Gastrocnemius medialis (tissue), 4 donors: ENCODE measurements at regions of chr19 and their contacts with region 1.

Region 1: DNA sequence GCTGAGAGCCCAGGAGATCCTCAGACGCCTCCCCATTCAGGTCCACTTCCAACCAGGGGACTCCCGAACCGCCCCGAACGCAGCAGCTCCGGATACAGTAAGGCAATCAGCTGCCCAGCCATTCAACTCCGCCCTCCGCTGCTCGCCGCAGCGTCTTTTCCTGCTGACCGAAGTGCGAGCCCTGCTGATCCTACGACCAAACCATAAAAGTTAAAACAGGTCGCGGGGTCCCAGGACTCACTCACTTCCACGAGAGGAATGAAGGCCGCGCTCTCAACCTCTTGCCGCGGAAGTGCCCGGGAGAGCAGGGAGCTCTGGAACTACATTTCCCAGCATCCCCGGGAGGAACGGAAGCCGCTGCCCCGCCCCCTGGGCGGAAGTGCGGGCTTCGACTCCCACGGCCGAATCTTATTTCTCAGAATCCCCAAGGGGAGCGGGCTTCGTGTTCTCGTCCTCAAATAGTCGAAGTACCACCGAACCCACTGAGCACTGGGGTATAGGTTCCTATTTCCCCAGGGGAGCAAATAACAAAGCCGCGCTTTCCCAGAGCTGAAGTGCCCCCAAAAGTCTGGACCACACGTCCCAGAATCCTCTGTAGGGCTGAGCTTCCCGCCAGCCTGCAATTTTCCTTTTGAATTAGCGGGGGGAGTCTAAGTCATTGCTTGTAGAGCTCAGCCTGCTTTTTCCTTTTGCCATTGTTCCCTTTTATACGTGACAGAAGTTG is at the start of gene ZNF45:
- DNase-seq: peak; percentile 80 to 83
- ATAC-seq: peak; percentile 98 to 99
- H3K4me3 ChIP-seq: peak within 1 kb of the TSS; percentile 52 to 78 (median 68)
- H3K27ac ChIP-seq: peak within 1 kb of the TSS; percentile 71 to 87 (median 77)
- H3K4me1 ChIP-seq: peaks cover 14 to 17% of the 10 kb centered on the region in 2 donors
- H3K27me3 ChIP-seq: no peaks in the 10 kb centered on the region
- CTCF ChIP-seq: no peak
- POLR2A ChIP-seq: no peak
- total RNA-seq, gene ZNF45: 2.8 to 7.7 (median 4.0) TPM

Region 2: DNA sequence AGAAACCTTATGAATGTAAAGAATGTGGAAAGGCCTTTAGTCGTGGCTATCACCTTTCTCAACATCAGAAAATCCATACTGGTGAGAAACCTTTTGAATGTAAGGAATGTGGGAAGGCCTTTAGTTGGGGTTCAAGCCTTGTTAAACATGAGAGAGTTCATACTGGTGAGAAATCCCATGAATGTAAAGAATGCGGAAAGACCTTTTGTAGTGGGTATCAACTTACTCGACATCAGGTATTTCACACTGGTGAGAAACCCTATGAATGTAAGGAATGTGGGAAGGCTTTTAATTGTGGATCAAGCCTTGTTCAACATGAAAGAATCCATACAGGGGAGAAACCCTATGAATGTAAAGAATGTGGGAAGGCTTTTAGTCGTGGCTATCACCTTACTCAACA is 87.3 kb before region 1 on chr19:
- in situ Hi-C with region 1: no loop called
- intact Hi-C with region 1: no loop called
- DNase-seq: no peak
- ATAC-seq: no peak
- H3K4me3 ChIP-seq: peak overlapping the region in 1 of 4 donors; percentile 28
- H3K27ac ChIP-seq: no peak overlapping the region
- H3K4me1 ChIP-seq: no peaks in the 10 kb centered on the region
- H3K27me3 ChIP-seq: no peaks in the 10 kb centered on the region
- CTCF ChIP-seq: no peak
- POLR2A ChIP-seq: no peak

Region 3: GRCh38 chr19:43950834-43951645 is 15.9 kb after region 1 on chr19 and contains the start of gene ZNF221:
- in situ Hi-C with region 1: no loop called
- intact Hi-C with region 1: loop called (anchors 1 kb)
- DNase-seq: peak; percentile 87 to 90
- ATAC-seq: peak; percentile 100
- H3K4me3 ChIP-seq: peak within 1 kb of the TSS; percentile 70 to 97 (median 84)
- H3K27ac ChIP-seq: peak within 1 kb of the TSS; percentile 66 to 80 (median 74)
- H3K4me1 ChIP-seq: peaks cover 0 to 3% of the 10 kb centered on the region in 2 donors
- H3K27me3 ChIP-seq: no peaks in the 10 kb centered on the region
- CTCF ChIP-seq: peak in 4 of 5 experiments; percentile 19 to 48 (median 38)
- POLR2A ChIP-seq: no peak
- total RNA-seq, gene ZNF221: 0.76 to 15.3 (median 0.96) TPM

Region 4: DNA sequence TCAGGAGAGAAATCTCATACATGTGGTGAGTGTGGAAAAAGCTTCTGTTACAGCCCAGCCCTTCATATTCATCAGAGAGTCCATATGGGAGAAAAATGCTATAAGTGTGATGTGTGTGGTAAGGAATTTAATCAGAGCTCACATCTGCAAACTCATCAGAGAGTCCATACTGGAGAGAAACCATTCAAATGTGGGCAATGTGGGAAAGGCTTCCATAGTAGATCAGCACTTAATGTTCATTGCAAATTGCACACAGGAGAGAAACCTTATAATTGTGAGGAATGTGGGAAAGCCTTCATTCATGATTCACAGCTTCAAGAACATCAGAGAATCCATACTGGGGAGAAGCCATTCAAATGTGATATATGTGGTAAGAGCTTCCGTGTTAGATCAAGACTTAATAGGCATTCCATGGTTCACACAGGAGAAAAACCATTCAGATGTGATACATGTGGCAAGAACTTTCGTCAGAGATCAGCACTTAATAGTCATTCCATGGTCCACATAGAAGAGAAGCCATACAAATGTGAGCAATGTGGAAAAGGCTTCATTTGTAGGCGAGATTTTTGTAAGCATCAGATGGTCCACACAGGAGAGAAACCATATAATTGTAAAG is 31.0 kb after region 1 on chr19:
- in situ Hi-C with region 1: no loop called
- intact Hi-C with region 1: no loop called
- DNase-seq: no peak
- ATAC-seq: no peak
- H3K4me3 ChIP-seq: peak overlapping the region in 1 of 4 donors; percentile 35
- H3K27ac ChIP-seq: no peak overlapping the region
- H3K4me1 ChIP-seq: no peaks in the 10 kb centered on the region
- H3K27me3 ChIP-seq: no peaks in the 10 kb centered on the region
- CTCF ChIP-seq: no peak
- POLR2A ChIP-seq: no peak

Region 5: DNA sequence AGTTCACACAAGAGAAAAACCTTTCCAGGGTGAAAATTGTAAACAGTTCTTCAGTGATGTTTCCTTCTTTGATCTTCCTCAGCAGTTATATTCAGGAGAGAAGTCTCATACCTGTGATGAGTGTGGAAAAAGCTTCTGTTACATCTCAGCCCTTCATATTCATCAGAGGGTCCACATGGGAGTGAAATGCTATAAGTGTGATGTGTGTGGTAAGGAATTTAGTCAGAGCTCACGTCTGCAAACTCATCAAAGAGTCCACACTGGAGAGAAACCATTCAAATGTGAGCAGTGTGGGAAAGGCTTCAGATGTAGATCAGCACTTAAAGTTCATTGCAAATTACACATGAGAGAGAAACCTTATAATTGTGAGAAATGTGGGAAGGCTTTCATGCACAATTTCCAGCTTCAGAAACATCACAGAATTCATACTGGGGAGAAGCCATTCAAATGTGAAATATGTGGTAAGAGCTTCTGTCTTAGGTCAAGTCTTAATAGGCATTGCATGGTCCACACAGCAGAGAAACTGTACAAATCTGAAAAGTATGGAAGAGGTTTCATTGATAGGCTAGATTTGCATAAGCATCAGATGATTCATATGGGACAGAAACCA is 97.0 kb after region 1 on chr19:
- in situ Hi-C with region 1: no loop called
- intact Hi-C with region 1: no loop called
- DNase-seq: no peak
- ATAC-seq: no peak
- H3K4me3 ChIP-seq: peak overlapping the region in 1 of 4 donors; percentile 8
- H3K27ac ChIP-seq: no peak overlapping the region
- H3K4me1 ChIP-seq: no peaks in the 10 kb centered on the region
- H3K27me3 ChIP-seq: no peaks in the 10 kb centered on the region
- CTCF ChIP-seq: no peak
- POLR2A ChIP-seq: no peak

Region 6: DNA sequence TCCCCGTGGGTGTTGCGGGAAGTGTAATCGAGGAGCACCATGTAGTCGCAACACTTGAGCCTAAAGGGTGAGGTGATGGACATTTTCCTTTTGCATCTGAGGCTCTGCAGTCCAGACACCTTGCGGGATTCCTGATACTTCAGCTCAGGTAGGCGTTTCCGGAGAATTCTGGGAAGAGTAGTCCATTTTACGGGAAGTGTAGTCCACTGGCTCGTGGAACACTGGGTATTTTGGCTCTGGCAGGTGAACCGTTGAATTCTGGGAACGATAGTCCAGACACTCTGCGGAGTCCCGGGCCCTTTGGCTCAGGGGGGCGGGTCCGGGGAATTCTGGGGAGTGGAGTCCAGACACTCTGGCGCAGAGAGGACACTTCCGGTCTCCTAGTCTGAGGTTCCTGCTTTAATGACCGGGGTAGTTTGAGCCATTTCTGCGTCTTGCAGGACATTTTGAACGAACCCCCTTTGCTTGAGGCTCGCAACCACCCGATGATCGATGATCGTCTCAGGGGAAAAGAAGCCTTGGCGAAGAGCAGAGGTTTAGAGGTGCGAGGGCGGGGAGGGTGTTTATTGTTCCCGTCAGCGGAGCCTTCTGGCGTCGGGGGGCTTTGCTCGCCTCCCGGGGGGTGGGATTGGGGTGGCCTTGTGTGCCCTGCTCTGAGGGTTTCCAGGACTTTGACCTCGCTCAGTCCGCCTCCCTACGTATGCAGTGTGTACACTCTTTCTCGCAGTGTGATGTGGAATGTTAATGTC is 116.7 kb after region 1 on chr19 and contains the start of gene ZNF223:
- in situ Hi-C with region 1: no loop called
- intact Hi-C with region 1: no loop called
- DNase-seq: peak; percentile 94
- ATAC-seq: peak; percentile 100
- H3K4me3 ChIP-seq: peak within 1 kb of the TSS; percentile 72 to 84 (median 81)
- H3K27ac ChIP-seq: peak within 1 kb of the TSS; percentile 73 to 81 (median 78)
- H3K4me1 ChIP-seq: peaks cover 12 to 18% of the 10 kb centered on the region in 2 donors
- H3K27me3 ChIP-seq: peaks cover 0 to 25% (median 5%) of the 10 kb centered on the region in 3 donors
- CTCF ChIP-seq: no peak
- POLR2A ChIP-seq: no peak
- total RNA-seq, gene ZNF223: 0.56 to 3.0 (median 0.91) TPM in 3 of 4 donors, not detected in the other

Region 7: GRCh38 chr19:44071824-44072542 is 136.8 kb after region 1 on chr19 and contains the start of gene ZNF284:
- in situ Hi-C with region 1: no loop called
- intact Hi-C with region 1: loop called (anchors 2 kb)
- DNase-seq: peak; percentile 82 to 87
- ATAC-seq: peak; percentile 100
- H3K4me3 ChIP-seq: peak within 1 kb of the TSS; percentile 60 to 83 (median 77)
- H3K27ac ChIP-seq: peak within 1 kb of the TSS; percentile 56 to 79 (median 59)
- H3K4me1 ChIP-seq: peaks cover 10 to 13% of the 10 kb centered on the region in 2 donors
- H3K27me3 ChIP-seq: no peaks in the 10 kb centered on the region
- CTCF ChIP-seq: no peak
- POLR2A ChIP-seq: peak in 1 of 2 donors; percentile 20
- total RNA-seq, gene ZNF284: 0.38 to 1.3 (median 0.63) TPM

Region 8: DNA sequence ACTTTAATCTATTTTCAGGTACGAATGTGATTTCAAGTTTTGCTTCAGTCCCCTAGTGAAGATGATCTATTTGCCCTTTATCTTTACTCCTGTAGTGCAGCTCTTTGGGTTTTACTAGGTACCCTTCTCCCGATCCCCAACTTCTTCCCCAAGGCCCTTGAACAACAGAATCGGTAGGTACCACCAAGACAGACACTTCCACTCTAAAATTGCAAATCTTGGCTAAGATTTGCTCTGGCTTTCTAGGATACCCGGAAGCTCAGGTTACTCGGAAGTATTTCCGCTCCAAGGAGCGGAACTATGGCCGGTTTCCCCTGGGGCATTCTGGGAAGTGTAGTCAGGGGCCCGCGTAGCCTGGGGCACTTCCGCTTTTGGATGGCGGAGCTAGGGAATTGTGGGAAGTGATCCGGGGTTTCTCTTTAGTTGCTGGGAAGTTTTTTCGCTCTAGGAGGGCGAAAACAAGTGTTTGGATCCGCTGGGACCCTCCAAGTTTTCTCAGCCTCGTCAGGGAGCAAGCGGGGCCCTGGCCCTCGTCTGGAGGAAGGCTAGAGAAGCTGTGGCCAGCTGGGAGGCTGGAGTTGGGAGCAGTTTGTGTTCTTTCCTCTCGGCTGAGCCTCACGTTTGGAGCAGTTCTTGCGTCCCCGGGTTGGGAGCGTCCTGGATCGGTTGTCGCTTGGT is 272.1 kb after region 1 on chr19:
- in situ Hi-C with region 1: no loop called
- intact Hi-C with region 1: loop called (anchors 2 kb)
- DNase-seq: peak; percentile 75 to 84
- ATAC-seq: peak; percentile 91 to 92
- H3K4me3 ChIP-seq: peak overlapping the region; percentile 58 to 88 (median 78)
- H3K27ac ChIP-seq: peak overlapping the region; percentile 79 to 87 (median 82)
- H3K4me1 ChIP-seq: peaks cover 4 to 7% of the 10 kb centered on the region in 2 donors
- H3K27me3 ChIP-seq: no peaks in the 10 kb centered on the region
- CTCF ChIP-seq: no peak
- POLR2A ChIP-seq: peak in 1 of 2 donors; percentile 28